Activated naive CD8-positive, alpha-beta T cell treated with anti-CD3 and anti-CD28 coated beads, Interleukin-2, amount 10 ng/mL, durations not matched to agents 7 days and 5 days (primary cell): ENCODE measurements at regions of chr2 and their contacts with region 1.

Region 1: GRCh38 chr2:171922230-171923022 is at the start of gene HAT1:
- DNase-seq: peak; percentile 97
- ATAC-seq: peak; percentile 92
- H3K4me3 Mint-ChIP-seq: peak within 1 kb of the TSS; percentile 98
- H3K27ac Mint-ChIP-seq: peak within 1 kb of the TSS; percentile 98
- H3K4me1 Mint-ChIP-seq: peaks cover 27% of the 10 kb centered on the region
- H3K27me3 Mint-ChIP-seq: no peaks in the 10 kb centered on the region
- total RNA-seq, gene HAT1: 52.5 to 54.5 TPM

Region 2: DNA sequence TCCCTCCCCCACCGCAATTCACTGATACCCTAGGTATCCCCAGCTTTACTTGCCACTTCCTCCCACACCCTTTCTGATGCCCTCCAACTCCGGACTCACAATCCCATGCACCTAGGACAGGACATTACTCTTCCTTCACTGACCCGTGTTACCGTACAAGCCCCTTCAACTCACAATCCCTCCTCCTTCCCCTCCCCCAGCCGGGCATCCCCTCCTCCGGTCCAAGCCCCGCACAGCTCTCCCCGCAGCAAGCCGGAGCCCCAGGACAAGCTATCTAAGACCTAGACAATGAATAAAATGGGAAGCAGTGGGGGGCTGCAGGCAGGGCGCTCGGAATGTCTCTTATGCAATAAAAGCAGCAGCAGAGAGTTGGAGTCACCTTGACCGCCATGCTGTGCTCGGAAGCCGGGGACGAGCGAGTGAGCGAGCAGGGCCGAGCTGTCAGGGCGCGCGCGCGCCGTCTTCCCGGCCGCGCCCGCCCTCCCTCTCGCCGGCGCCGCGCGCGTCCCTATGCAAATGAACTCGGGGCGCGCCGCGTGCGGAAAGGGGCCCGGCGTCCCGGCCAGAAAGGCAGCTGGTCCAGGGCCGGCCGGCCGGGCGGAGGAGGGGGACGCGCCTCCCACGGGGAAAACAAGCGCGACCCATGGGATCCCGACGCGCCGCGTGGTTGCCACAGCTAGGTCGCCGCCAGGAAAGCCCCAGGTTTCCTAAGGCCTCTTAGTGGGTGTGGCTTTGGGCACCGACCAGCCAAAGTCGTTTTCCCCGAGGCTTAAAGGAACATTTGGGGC is 28.4 kb before region 1 on chr2 and contains the start of gene SLC25A12:
- POLR2A ChIA-PET with region 1: interaction called, 20 read pairs
- DNase-seq: peak; percentile 87
- ATAC-seq: peak; percentile 97
- H3K4me3 Mint-ChIP-seq: peak within 1 kb of the TSS; percentile 95
- H3K27ac Mint-ChIP-seq: peak within 1 kb of the TSS; percentile 92
- H3K4me1 Mint-ChIP-seq: peaks cover 27% of the 10 kb centered on the region
- H3K27me3 Mint-ChIP-seq: peaks cover 1% of the 10 kb centered on the region
- total RNA-seq, gene SLC25A12: 25.1 to 27.5 TPM